Colonic mucosa (tissue), 4 donors: ENCODE measurements at regions of chr2 and their contacts with region 1.

Region 1: GRCh38 chr2:231297108-231297908 is 98.2 kb upstream of the B3GNT7 start:
- DNase-seq: peak; percentile 74
- H3K4me3 ChIP-seq: no peak overlapping the region
- H3K27ac ChIP-seq: no peak overlapping the region
- H3K4me1 ChIP-seq: peaks cover 6% of the 10 kb centered on the region
- H3K27me3 ChIP-seq: no peaks in the 10 kb centered on the region
- CTCF ChIP-seq: peak; percentile 80

Region 2: GRCh38 chr2:230614913-230615332 is 682.4 kb before region 1 on chr2:
- intact Hi-C with region 1: no loop called
- DNase-seq: no peak
- H3K4me3 ChIP-seq: no peak overlapping the region
- H3K27ac ChIP-seq: no peak overlapping the region
- H3K4me1 ChIP-seq: no peaks in the 10 kb centered on the region
- H3K27me3 ChIP-seq: no peaks in the 10 kb centered on the region
- CTCF ChIP-seq: no peak

Region 3: GRCh38 chr2:231245253-231246094 is 51.8 kb before region 1 on chr2:
- intact Hi-C with region 1: loop called (anchors 10 kb)
- DNase-seq: peak; percentile 50
- H3K4me3 ChIP-seq: no peak overlapping the region
- H3K27ac ChIP-seq: peak overlapping the region; percentile 83
- H3K4me1 ChIP-seq: peaks cover 8% of the 10 kb centered on the region
- H3K27me3 ChIP-seq: no peaks in the 10 kb centered on the region
- CTCF ChIP-seq: no peak

Region 4: DNA sequence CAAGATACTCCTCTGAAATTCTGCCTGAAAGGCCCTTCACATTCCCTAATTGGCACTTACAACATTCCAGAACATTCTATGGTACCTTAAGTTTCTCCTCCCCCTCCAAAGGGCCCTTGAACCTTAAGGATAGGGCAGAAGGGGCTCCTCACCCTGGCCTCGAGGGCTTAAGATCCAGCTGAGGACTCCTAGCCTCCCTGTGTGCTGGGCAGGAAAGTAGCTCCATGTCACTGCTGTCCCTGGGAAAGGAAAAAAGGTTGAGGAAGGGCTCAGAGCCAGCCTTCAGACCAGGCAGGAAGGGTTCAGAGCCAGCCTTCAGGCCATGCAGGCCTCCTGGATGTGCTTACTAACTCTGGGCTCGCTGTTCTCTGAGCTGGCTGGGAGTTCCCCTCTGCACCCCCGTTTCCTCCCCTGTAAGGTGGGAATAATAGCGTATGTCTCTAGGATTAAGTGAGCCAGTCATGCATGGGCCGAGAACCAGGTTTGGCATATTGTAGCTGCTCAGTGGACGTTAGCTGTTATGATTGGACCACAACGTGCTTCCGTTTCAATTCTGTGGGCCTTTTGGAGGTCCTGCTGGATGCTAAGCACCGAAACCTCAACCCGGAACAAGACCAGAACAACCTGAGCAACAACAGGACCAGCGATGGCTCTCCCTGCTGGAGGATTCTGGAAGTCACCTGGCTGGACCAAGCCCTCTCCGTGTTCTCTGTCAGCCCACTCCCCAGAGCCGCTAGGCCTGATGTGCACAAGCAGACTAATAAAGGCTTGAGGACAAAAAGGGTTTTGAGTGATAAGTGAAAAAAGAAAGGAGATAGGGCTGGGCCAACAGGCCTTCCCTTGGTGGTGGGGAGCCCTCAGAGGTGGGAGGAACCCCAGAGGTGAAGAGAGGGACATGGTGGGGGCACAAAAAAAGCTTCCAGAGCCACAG is 97.2 kb after region 1 on chr2:
- intact Hi-C with region 1: loop called (anchors 5 kb)
- DNase-seq: peak; percentile 67
- H3K4me3 ChIP-seq: peak overlapping the region; percentile 77
- H3K27ac ChIP-seq: peak overlapping the region; percentile 55
- H3K4me1 ChIP-seq: peaks cover 6% of the 10 kb centered on the region
- H3K27me3 ChIP-seq: no peaks in the 10 kb centered on the region
- CTCF ChIP-seq: peak; percentile 49